OCI-LY7 (cell line): ENCODE measurements at regions of chr22 and their contacts with region 1.

Region 1: GRCh38 chr22:20495861-20496681 is 476 bp upstream of the KLHL22 start:
- DNase-seq: peak; percentile 92
- H3K4me3 ChIP-seq: peak overlapping the region; percentile 70
- H3K27ac ChIP-seq: peak overlapping the region; percentile 58
- H3K4me1 ChIP-seq: peaks cover 13% of the 10 kb centered on the region
- CTCF ChIP-seq: peak; percentile 96

Region 2: DNA sequence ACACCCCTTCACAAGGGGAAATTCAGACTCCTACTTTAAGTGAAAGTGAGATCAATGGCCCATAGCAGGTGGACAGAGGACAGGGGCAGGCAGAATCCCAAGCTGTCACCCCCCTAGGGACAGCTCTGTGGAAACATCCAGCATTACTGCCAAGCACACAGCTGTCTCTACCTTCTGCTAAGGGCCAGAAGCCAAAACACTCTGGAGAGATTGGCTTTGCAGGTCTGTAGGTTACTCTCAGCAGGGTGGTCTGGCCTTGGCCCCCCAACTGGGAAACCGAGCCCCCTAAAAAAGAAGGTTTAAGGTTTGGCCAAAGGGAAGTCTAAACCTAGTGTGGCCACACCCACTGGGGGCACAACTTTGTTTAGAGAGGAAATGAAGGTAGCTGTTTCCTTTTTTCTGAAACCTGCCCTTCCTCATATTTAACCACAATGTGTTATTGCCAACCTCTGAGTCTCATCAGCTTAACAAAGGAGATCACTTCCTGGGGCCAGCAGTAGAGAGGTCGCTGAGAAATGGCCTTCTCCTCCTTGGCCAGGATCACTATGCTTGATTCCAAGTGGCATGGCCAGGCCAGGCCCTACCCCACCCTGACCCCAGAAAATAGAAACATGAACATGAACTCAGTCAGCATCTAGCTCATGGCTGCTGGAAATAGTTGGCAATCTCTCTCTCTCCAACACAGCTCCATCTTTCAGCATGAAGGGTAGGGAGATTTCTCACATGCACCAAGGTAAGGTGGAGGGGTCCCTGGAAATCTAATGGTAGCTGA is 32.6 kb before region 1 on chr22:
- CTCF ChIA-PET with region 1: interaction called, 3 read pairs
- POLR2A ChIA-PET with region 1: interaction called, 8 read pairs
- intact Hi-C with region 1: loop called (anchors 1 kb)
- DNase-seq: peak; percentile 86
- H3K4me3 ChIP-seq: peak overlapping the region; percentile 43
- H3K27ac ChIP-seq: peak overlapping the region; percentile 86
- H3K4me1 ChIP-seq: peaks cover 25% of the 10 kb centered on the region
- CTCF ChIP-seq: no peak